Left colon (tissue), 2 donors: ENCODE measurements at regions of chr2 and their contacts with region 1.

Region 1: GRCh38 chr2:28958689-28959088 is 22.4 kb upstream of the TOGARAM2 start:
- DNase-seq: peak in 1 of 2 donors; percentile 31
- ATAC-seq: peak; percentile 86

Region 2: GRCh38 chr2:29196792-29197788 is 238.4 kb after region 1 on chr2:
- intact Hi-C with region 1: loop called (anchors 2 to 10 kb)
- DNase-seq: peak; percentile 40 to 78
- ATAC-seq: peak; percentile 87

Region 3: GRCh38 chr2:29206941-29207340 is 248.3 kb after region 1 on chr2:
- intact Hi-C with region 1: loop called in 1 of 2 experiments (anchors 10 kb)
- DNase-seq: no peak
- ATAC-seq: no peak

Region 4: DNA sequence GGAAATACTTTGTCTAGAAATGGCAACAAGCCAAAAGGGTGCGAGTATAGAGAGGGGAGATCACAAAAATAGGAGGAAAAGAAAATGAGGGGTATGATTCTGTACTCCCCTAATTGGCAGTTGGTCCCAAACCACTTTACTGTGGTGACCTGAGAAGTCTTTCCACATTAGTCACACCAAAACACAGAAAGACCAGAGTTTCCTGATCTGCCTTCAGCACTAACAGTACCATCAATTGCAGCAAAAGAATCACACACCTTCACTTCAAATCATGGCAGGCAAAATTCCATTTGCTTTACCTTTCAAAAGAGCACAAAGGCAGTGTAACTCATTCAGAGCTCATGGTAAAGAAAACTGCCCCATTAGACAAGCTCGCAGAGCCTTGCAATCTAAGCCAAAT is 875.9 kb after region 1 on chr2:
- intact Hi-C with region 1: loop called in 1 of 2 experiments (anchors 10 kb)
- DNase-seq: no peak
- ATAC-seq: no peak